ENCODE measurements at regions of chr7 and their contacts with region 1.

Region 1: DNA sequence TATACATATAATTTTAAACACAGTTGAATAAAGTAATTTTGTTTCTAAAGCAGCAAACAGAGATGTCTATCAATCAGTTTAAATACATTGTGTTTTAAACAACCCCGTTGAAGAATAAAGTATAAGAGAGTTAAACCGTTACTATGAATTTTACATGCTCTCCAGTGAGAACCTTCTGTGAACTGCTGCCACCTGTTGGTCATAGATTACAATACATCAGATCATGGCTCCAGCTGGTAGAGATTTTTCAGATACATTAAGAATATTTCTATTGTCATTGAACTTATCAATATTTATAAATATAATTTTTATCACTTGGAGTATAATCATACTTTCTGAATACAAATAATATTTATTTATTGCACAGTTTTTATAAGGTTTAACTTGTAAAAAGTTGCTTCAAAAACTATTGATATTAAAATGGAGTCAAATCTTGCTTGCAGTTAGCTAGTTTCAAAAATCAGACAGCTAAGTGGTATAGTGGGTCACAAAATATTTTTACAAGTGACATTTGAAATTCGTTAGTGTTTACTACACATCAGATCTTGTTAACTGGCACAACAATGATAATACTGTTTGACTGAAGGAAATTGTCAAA is 561.2 kb upstream of the PHF14 start:
- DNase-seq: no peak
- H3K4me3 Mint-ChIP-seq: no peak overlapping the region
- H3K27ac Mint-ChIP-seq: no peak overlapping the region
- H3K4me1 Mint-ChIP-seq: no peaks in the 10 kb centered on the region
- H3K27me3 Mint-ChIP-seq: no peaks in the 10 kb centered on the region

Region 2: GRCh38 chr7:9921326-9921725 is 491.2 kb before region 1 on chr7:
- intact Hi-C with region 1: no loop called
- DNase-seq: no peak
- H3K4me3 Mint-ChIP-seq: no peak overlapping the region
- H3K27ac Mint-ChIP-seq: no peak overlapping the region
- H3K4me1 Mint-ChIP-seq: no peaks in the 10 kb centered on the region
- H3K27me3 Mint-ChIP-seq: no peaks in the 10 kb centered on the region

Region 3: DNA sequence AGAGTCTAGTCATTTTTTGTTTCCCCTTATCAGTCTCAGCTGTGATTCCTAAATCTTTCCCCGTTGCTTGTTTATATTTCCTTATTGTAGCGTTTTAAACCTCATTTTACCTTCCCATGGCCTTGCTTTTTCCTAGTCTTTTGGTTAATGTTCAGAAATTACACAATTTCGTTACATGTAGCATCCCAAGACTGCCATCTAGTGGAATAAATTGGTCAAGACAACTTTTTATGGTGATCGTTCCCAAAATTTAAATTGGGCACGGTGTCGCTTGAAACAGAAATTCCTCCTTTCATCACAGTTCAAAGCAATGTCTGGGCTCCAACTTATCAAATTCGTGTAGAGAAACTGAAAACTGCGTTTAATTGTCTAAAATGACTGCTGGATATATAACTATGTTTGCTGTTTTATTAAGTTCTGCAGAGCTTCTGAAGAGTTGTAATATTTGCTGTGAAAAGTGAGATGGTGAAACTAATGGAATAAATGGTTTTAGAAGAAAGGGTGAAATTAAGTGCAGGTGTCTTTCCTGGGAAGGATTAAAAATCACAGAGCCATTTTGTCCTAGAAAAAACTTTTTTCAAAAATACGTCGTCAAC is 931.4 kb after region 1 on chr7:
- intact Hi-C with region 1: loop called (anchors 5 kb)
- DNase-seq: no peak
- H3K4me3 Mint-ChIP-seq: no peak overlapping the region
- H3K27ac Mint-ChIP-seq: no peak overlapping the region
- H3K4me1 Mint-ChIP-seq: no peaks in the 10 kb centered on the region
- H3K27me3 Mint-ChIP-seq: peaks cover 2% of the 10 kb centered on the region